Activated T-helper 1 cell treated with anti-CD3 and anti-CD28 coated beads, Interleukin-12 subunit alpha, Interleukin-12 subunit beta, Interleukin-2, Interleukin-4 antibody, amounts not matched to agents 30 ng/mL and 10 ng/mL and 1 ng/mL, durations not matched to agents 14 hours and 24 hours and 36 hours (primary cell): ENCODE measurements at regions of chr5 and their contacts with region 1.

Region 1: DNA sequence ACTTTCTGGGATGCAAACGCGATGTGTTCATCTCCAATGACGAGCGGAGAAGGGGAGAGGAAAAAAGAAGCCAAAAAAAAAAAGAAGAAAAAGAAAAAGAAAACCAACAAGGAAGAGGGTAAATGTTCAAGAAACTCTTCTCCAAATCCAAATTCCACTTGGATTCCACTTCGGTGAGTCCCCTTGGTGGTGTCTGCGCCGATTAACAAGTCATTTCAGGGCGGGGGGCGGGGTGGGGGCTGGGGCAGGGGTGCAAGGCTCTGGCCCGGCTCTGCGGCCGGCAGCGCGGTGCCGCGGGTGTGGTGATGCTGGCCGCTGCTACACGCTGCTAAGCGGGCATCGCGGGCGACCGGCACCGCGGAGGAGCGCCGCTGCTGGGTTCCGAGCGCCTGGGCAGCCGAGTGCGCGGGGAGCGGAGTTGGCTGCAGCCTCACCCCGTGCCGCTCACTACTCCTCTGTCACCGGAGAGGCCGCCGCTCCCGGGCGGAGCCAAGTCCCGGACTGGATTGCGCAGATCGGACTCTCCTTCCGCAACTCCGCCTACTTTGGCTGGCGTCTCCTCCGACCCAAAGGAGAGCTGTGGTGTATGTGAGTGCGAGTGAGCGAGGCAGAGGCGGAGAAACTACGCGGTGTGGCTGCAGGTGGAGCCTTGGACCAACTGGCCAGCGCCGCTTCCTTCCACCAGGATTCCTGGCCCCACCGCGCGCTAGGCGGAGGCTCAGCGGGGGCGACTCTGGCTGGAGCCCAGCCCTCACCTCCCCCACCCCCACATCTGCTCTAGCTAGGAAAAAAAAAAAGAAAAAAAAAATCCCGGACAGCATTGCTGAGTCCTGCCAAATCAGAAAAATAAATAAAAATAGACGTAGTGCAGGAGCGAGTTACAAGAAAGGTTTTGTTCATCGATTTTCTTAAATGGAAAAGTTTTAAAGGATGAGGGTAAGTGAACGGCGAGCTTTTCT is at the start of gene SEMA6A:
- DNase-seq: peak; percentile 59
- H3K4me3 Mint-ChIP-seq: peak within 1 kb of the TSS; percentile 81
- H3K27ac Mint-ChIP-seq: peak within 1 kb of the TSS; percentile 76
- H3K4me1 Mint-ChIP-seq: peaks cover 26% of the 10 kb centered on the region
- H3K27me3 Mint-ChIP-seq: peaks cover 78% of the 10 kb centered on the region
- total RNA-seq, gene SEMA6A: 0.23 and 0.39 TPM in 2 replicates

Region 2: GRCh38 chr5:115962503-115963402 is 611.9 kb before region 1 on chr5:
- intact Hi-C with region 1: loop called (anchors 5 kb)
- DNase-seq: no peak
- H3K4me3 Mint-ChIP-seq: no peak overlapping the region
- H3K27ac Mint-ChIP-seq: no peak overlapping the region
- H3K4me1 Mint-ChIP-seq: no peaks in the 10 kb centered on the region
- H3K27me3 Mint-ChIP-seq: peaks cover 55% of the 10 kb centered on the region